ENCODE measurements at regions of chr6 and their contacts with region 1.

Region 1: DNA sequence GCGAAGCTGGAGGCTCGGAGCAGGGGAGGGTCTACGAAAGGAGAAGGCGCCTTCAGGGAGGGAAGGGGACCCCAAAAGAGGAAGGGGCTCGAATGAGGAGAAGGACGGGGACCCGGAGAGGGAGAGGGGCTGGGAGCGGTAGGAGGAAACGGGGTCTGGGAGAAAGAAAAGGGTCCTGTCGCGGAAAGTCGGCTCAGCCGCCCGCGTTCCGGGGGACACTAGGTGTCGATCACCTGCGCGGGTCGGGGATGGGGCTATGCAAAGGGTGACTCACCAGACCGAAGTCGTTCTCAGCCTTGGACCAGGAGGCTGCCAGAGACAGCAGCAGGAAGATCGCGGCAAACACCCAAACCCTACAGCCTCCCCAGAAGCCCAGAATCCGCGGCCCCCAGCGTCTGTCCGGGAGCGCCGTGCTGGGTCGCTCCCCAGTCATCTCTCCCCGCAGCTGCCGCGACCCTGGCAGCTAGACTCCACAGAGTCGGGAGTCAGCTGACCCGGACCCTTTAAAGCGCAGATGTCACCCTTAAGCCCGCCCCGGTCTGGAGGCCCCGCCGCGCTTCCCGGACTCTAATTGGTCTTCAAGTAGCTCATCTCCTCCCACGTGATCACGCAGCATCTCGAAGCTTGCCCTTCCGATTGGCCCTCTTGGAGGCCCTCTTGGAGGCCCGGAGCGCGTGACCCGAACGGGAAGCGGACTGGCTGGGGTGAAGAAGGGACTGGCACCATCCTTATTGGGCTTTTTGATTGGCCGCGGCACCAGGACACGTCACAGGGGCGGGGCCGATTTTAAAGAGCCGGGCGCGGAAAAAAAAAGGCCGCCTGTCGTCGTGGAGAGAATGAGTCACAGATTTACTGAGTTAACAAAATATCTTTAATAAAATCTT is at the start of gene NEU1:
- DNase-seq: peak; percentile 99 to 100
- H3K4me3 ChIP-seq: peak within 1 kb of the TSS; percentile 76
- H3K4me3 Mint-ChIP-seq: peak within 1 kb of the TSS; percentile 100
- H3K27ac Mint-ChIP-seq: peak within 1 kb of the TSS; percentile 100
- H3K4me1 ChIP-seq: peaks cover 14% of the 10 kb centered on the region
- H3K4me1 Mint-ChIP-seq: peaks cover 24% of the 10 kb centered on the region
- H3K27me3 ChIP-seq: no peaks in the 10 kb centered on the region
- H3K27me3 Mint-ChIP-seq: no peaks in the 10 kb centered on the region
- CTCF ChIP-seq: no peak
- total RNA-seq, gene NEU1: 173 and 176 TPM in 2 replicates

Region 2: DNA sequence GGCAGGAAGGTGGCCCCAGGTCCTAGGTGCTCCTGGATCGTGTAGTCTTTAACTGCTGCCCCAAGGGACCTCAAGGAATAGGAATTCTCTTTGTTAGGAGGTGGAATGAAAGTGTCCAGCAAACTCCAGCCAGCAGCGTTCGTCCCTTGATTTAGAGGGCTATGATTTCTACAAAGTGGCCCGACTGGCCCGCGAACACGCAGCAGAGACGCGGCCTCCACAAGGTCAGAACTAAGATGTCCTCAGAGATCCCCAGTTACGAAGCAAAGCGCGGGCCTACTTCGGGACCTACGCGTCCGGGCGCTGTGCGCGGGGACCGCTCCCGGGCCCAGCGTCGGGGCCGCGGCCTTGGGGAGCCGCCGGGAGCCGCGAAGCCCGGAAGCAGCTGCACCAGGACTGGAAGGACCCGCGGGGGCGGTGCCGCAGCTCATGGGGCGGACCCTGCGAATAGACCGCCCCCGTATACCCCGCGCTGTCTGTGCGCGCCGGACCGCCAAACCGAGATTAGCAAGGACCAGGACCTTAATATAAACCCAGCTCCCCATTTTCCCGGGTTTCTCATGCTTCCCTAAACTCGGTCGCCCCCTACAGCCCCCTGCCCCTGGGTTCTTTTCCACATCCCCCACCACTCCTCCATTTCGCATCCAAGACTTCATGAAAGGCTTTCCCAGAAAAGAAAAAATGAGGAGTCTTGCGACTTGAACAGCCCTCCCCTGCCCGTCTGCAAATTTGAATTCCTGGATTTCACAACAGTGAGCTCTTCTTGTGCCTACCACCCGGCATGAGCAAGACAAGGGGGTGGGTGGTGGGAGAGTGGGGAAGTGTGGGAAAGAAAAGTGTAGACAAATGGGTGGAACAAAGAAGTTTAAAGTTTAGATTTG is 202.0 kb before region 1 on chr6 and contains the start of gene C6orf47:
- CTCF ChIA-PET with region 1: no interaction called
- POLR2A ChIA-PET with region 1: interaction called, 14 read pairs
- intact Hi-C with region 1: no loop called
- DNase-seq: peak; percentile 83 to 89
- H3K4me3 ChIP-seq: peak within 1 kb of the TSS; percentile 53
- H3K4me3 Mint-ChIP-seq: peak within 1 kb of the TSS; percentile 88
- H3K27ac Mint-ChIP-seq: peak within 1 kb of the TSS; percentile 89
- H3K4me1 ChIP-seq: peaks cover 31% of the 10 kb centered on the region
- H3K4me1 Mint-ChIP-seq: peaks cover 47% of the 10 kb centered on the region
- H3K27me3 ChIP-seq: no peaks in the 10 kb centered on the region
- H3K27me3 Mint-ChIP-seq: no peaks in the 10 kb centered on the region
- CTCF ChIP-seq: no peak
- total RNA-seq, gene C6orf47: 19.4 and 19.7 TPM in 2 replicates

Region 3: GRCh38 chr6:31769684-31770371 is 92.8 kb before region 1 on chr6:
- CTCF ChIA-PET with region 1: interaction called, 7 read pairs
- POLR2A ChIA-PET with region 1: interaction called, 8 read pairs
- intact Hi-C with region 1: loop called (anchors 1 kb)
- DNase-seq: peak; percentile 85 to 89
- H3K4me3 ChIP-seq: no peak overlapping the region
- H3K4me3 Mint-ChIP-seq: no peak overlapping the region
- H3K27ac Mint-ChIP-seq: no peak overlapping the region
- H3K4me1 ChIP-seq: peaks cover 15% of the 10 kb centered on the region
- H3K4me1 Mint-ChIP-seq: peaks cover 8% of the 10 kb centered on the region
- H3K27me3 ChIP-seq: no peaks in the 10 kb centered on the region
- H3K27me3 Mint-ChIP-seq: no peaks in the 10 kb centered on the region
- CTCF ChIP-seq: peak; percentile 85 to 87

Region 4: DNA sequence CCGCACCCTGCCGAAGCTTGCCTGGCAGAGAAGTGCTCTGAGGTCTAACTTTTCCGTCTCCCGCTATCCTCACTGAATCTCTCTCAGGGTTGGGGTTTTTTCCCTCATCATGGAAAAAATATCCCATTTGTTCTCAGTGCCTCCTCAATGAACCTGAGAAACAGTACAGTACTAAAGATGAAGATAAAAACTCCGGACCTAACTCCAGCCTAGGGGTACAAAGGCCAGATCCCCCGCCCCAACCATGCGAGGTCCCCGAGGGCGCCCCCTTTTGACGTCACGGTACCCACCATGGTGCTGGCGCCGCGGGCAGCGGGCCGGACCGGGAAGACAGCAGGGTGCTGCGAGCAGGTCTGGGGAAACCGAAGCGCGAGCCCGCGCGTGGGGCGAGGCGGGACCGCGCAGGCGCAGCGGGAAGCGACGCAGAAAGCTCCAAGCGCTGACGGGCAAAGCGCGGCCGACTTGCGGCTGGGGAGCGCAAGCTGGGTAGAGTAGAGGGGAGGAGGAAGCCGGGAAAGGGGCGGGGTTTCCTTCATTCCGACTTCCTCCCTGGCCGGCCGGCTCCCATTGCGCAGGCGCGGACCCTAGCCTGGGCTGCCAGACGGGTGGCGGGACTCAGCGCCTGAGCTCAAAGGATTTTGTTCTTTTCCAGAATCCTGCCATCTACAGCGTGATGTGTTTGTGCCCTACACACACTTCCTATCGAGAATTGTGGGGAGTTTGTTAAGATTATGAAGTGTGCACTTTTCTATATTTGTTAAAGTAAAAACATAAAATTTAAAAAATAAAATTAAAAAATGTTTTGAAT is 55.9 kb before region 1 on chr6 and contains the start of gene LSM2:
- CTCF ChIA-PET with region 1: interaction called, 5 read pairs
- POLR2A ChIA-PET with region 1: interaction called, 12 read pairs
- intact Hi-C with region 1: loop called (anchors 2 kb)
- DNase-seq: peak; percentile 96 to 98
- H3K4me3 ChIP-seq: peak within 1 kb of the TSS; percentile 68
- H3K4me3 Mint-ChIP-seq: peak within 1 kb of the TSS; percentile 92
- H3K27ac Mint-ChIP-seq: peak within 1 kb of the TSS; percentile 89
- H3K4me1 ChIP-seq: peaks cover 12% of the 10 kb centered on the region; the same call in 1 of the 2 replicates
- H3K4me1 Mint-ChIP-seq: peaks cover 12% of the 10 kb centered on the region
- H3K27me3 ChIP-seq: no peaks in the 10 kb centered on the region
- H3K27me3 Mint-ChIP-seq: no peaks in the 10 kb centered on the region
- CTCF ChIP-seq: peak; percentile 25 to 36
- total RNA-seq, gene LSM2: 56.3 and 61.2 TPM in 2 replicates

Region 5: GRCh38 chr6:31827286-31828079 is 35.1 kb before region 1 on chr6 and contains the start of gene HSPA1B:
- CTCF ChIA-PET with region 1: interaction called, 8 read pairs
- POLR2A ChIA-PET with region 1: interaction called, 40 read pairs
- intact Hi-C with region 1: no loop called
- DNase-seq: peak; percentile 98 to 100
- H3K4me3 ChIP-seq: peak within 1 kb of the TSS; percentile 71
- H3K4me3 Mint-ChIP-seq: peak within 1 kb of the TSS; percentile 96
- H3K27ac Mint-ChIP-seq: peak within 1 kb of the TSS; percentile 99
- H3K4me1 ChIP-seq: peaks cover 39% of the 10 kb centered on the region
- H3K4me1 Mint-ChIP-seq: peaks cover 10% of the 10 kb centered on the region
- H3K27me3 ChIP-seq: no peaks in the 10 kb centered on the region
- H3K27me3 Mint-ChIP-seq: no peaks in the 10 kb centered on the region
- CTCF ChIP-seq: no peak
- total RNA-seq, gene HSPA1B: 99.0 and 112 TPM in 2 replicates

Region 6: GRCh38 chr6:31847276-31847978 is 15.2 kb before region 1 on chr6:
- CTCF ChIA-PET with region 1: no interaction called
- POLR2A ChIA-PET with region 1: interaction called, 11 read pairs
- intact Hi-C with region 1: loop called (anchors 1 kb)
- DNase-seq: peak; percentile 75 to 79
- H3K4me3 ChIP-seq: no peak overlapping the region
- H3K4me3 Mint-ChIP-seq: no peak overlapping the region
- H3K27ac Mint-ChIP-seq: no peak overlapping the region
- H3K4me1 ChIP-seq: peaks cover 39% of the 10 kb centered on the region
- H3K4me1 Mint-ChIP-seq: peaks cover 26% of the 10 kb centered on the region
- H3K27me3 ChIP-seq: no peaks in the 10 kb centered on the region
- H3K27me3 Mint-ChIP-seq: no peaks in the 10 kb centered on the region
- CTCF ChIP-seq: no peak

Region 7: DNA sequence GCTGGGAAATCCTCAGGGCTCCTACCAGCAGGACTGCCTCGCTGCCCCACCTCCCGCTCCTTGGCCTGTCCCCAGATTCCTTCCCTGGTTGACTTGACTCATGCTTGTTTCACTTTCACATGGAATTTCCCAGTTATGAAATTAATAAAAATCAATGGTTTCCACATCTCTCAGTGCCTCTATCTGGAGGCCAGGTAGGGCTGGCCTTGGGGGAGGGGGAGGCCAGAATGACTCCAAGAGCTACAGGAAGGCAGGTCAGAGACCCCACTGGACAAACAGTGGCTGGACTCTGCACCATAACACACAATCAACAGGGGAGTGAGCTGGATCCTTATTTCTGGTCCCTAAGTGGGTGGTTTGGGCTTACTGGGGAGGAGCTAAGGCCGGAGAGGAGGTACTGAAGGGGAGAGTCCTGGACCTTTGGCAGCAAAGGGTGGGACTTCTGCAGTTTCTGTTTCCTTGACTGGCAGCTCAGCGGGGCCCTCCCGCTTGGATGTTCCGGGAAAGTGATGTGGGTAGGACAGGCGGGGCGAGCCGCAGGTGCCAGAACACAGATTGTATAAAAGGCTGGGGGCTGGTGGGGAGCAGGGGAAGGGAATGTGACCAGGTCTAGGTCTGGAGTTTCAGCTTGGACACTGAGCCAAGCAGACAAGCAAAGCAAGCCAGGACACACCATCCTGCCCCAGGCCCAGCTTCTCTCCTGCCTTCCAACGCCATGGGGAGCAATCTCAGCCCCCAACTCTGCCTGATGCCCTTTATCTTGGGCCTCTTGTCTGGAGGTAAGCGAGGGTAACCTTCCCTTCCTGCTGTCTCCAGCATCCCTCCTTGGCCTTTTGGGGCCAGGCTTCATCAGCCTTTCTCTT is 83.2 kb after region 1 on chr6 and contains the start of gene CFB:
- CTCF ChIA-PET with region 1: interaction called, 4 read pairs
- POLR2A ChIA-PET with region 1: interaction called, 10 read pairs
- intact Hi-C with region 1: no loop called
- DNase-seq: peak; percentile 88 to 93
- H3K4me3 ChIP-seq: peak within 1 kb of the TSS; percentile 33
- H3K4me3 Mint-ChIP-seq: peak within 1 kb of the TSS; percentile 58
- H3K27ac Mint-ChIP-seq: peak within 1 kb of the TSS; percentile 94
- H3K4me1 ChIP-seq: peaks cover 41% of the 10 kb centered on the region
- H3K4me1 Mint-ChIP-seq: peaks cover 49% of the 10 kb centered on the region
- H3K27me3 ChIP-seq: no peaks in the 10 kb centered on the region
- H3K27me3 Mint-ChIP-seq: no peaks in the 10 kb centered on the region
- CTCF ChIP-seq: no peak
- total RNA-seq, gene CFB: 31.0 and 32.1 TPM in 2 replicates

Measured in Caco-2 (cell line).